Aorta (tissue), 5 donors: ENCODE measurements at regions of chr3 and their contacts with region 1.

Region 1: DNA sequence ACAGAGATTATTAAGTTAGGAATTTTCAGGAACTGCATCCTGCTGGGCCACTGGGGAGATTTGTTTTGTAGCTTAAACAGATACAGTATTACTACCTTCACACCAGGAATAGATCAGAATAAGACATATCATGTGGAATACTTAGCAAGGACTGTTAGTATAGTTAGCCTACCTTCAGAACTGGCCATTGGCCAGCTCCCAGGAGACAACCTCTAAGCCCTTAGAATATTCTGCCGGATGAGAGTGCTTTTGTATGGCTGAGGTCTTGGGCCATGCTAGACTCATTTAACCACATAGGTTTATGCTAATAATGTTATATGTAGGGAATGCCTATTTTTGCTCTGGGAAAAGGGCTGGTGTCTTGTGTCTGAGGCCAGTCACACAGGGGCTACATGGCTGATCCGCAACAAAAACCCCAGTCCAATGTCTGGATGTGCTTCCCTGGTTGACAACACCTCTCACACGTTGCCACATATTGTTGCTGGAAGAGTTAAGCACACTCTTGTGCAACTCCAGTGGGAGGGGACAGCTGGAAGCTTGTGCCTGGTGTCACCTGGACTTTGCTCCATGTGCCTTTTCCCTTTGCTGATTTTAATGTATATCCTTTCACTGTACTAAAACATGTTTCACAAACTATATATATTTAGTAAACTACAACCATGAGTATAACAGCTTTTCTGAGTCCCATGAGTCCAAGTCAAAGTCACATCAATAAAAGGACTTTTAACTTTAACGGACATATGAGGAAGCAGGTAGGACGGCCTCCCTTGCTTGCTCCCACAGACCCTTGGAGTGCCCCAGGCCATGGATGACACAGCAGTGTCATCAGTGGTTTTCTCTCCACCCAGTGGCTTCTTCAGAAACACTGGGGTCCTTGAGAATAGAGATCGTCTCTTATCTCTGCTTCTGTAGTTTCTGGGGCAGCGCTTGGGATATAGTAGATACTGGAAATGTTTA is 118.0 kb upstream of the C3orf80 start:
- DNase-seq: no peak
- ATAC-seq: no peak
- H3K4me3 ChIP-seq: no peak overlapping the region
- H3K27ac ChIP-seq: no peak overlapping the region
- H3K4me1 ChIP-seq: no peaks in the 10 kb centered on the region
- H3K27me3 ChIP-seq: no peaks in the 10 kb centered on the region

Region 2: DNA sequence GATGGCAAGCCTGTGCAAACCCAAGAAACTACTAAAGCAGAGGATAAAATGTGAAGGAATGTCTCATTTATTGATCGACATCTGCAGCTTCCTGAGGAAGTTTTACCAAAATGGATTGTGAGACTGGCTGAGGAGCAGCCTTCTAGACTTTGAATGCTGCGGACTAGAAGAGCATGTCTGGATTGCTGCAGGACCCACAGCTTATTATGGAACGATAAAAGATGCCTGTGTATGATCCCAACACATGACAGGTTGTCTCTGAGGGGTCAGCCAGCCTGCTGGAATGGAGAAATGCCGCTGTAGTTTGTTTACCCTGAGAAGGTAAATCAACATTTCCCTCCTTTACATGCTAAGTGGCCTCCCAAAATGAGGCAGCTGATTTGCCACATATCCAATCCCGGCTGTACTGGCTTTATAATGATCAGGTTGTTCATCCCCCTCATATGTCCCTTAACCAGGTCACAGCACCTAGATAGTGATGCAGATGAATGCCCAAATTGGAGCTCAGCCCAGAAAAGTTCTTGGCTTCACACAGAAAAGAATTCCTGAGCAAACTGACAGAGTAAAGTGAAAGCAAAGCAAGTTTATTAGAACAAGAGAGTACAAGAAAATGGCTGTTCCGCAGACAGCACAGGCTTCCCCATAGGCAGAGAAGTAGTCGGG is 54.7 kb before region 1 on chr3:
- intact Hi-C with region 1: no loop called
- DNase-seq: no peak
- ATAC-seq: no peak
- H3K4me3 ChIP-seq: no peak overlapping the region
- H3K27ac ChIP-seq: peak overlapping the region in 1 of 2 donors; percentile 34
- H3K4me1 ChIP-seq: peaks cover 0 to 7% of the 10 kb centered on the region in 2 donors
- H3K27me3 ChIP-seq: no peaks in the 10 kb centered on the region

Region 3: GRCh38 chr3:160127308-160127707 is 20.1 kb after region 1 on chr3:
- intact Hi-C with region 1: loop called in 1 of 2 experiments (anchors 1 kb)
- DNase-seq: no peak
- ATAC-seq: no peak
- H3K4me3 ChIP-seq: no peak overlapping the region
- H3K27ac ChIP-seq: no peak overlapping the region
- H3K4me1 ChIP-seq: no peaks in the 10 kb centered on the region
- H3K27me3 ChIP-seq: no peaks in the 10 kb centered on the region